Right ventricle myocardium inferior (tissue), 1 donor: ENCODE measurements at regions of chr7 and their contacts with region 1.

Region 1: GRCh38 chr7:128862571-128863432 is at the start of gene ATP6V1F:
- DNase-seq: peak; percentile 99
- ATAC-seq: peak; percentile 87
- total RNA-seq, gene ATP6V1F: 128 TPM

Region 2: GRCh38 chr7:127702052-127702652 is 1160.7 kb before region 1 on chr7:
- intact Hi-C with region 1: no loop called
- DNase-seq: no peak
- ATAC-seq: no peak

Region 3: DNA sequence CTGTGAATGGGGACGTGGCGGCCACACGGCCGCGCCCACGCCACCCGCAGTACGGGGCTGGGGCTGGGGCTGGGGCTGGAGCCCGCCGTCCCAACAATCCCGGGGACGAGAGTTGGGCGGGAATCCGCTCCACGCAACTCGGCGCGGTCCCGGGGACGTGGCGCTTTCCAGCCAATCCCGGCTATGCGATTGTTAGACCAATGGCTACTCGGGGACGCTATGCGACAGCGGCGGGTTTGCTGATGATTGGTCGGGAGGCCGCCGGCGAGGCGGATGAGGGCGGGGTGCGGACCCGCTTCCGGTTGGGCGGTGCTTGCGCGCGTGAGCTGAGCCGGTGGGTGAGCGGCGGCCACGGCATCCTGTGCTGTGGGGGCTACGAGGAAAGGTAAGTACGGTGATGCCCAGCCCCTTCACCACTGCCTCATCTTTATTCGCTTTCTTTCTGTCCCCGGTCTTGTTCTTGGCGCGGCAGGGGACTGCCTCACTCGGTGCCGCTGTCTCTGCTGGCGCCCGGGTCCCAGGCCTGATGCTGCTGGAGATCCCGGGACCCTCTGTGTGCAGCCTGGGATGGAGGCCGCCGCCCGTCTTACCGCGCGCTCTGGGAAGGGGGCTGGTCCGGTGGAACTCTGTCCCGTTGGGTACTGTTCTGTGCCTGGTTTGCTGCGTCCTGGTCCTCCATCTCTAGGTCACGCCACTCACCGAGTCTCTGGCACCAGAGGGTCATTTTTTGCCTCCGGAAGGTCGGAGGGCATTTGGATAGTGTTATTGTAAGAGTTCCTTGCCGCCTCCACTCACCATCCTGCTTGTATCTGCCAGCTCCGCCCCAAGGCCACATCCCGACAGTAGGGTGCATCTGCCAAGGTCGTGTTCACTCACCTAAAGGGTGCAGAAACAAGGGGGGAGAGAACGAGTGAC is 123.5 kb before region 1 on chr7 and contains the start of gene CALU:
- intact Hi-C with region 1: loop called (anchors 5 kb)
- DNase-seq: peak; percentile 98
- ATAC-seq: peak; percentile 99
- total RNA-seq, gene CALU: 183 TPM

Region 4: GRCh38 chr7:128830231-128831177 is 32.3 kb before region 1 on chr7 and contains the start of gene FLNC:
- intact Hi-C with region 1: loop called (anchors 2 kb)
- DNase-seq: peak; percentile 80
- ATAC-seq: peak; percentile 24
- total RNA-seq, gene FLNC: 905 TPM

Region 5: GRCh38 chr7:129295015-129295423 is 432.2 kb after region 1 on chr7:
- intact Hi-C with region 1: no loop called
- DNase-seq: no peak
- ATAC-seq: peak; percentile 76